Naive thymus-derived CD4-positive, alpha-beta T cell (primary cell): ENCODE measurements at regions of chr11 and their contacts with region 1.

Region 1: GRCh38 chr11:207208-207862 is at the starts of genes BET1L and RIC8A:
- DNase-seq: peak; percentile 92 to 99 (median 98)
- ATAC-seq: peak; percentile 93
- H3K4me3 ChIP-seq: peak within 1 kb of the TSS; percentile 98
- H3K4me3 Mint-ChIP-seq: peak within 1 kb of the TSS; percentile 89 to 100 (median 96)
- H3K27ac ChIP-seq: peak within 1 kb of the TSS; percentile 93
- H3K27ac Mint-ChIP-seq: peak within 1 kb of the TSS; percentile 97 to 100 (median 99)
- H3K4me1 ChIP-seq: peaks cover 28 to 57% of the 10 kb centered on the region in 2 donors
- H3K4me1 Mint-ChIP-seq: peaks cover 17 to 72% (median 50%) of the 10 kb centered on the region in 7 donors
- H3K27me3 ChIP-seq: no peaks in the 10 kb centered on the region
- H3K27me3 Mint-ChIP-seq: no peaks in the 10 kb centered on the region
- total RNA-seq, gene BET1L: 47.1 to 125 (median 63.2) TPM
- total RNA-seq, gene RIC8A: 74.4 to 119 (median 92.0) TPM

Region 2: GRCh38 chr11:227824-228379 is 20.6 kb after region 1 on chr11:
- CTCF ChIA-PET with region 1: interaction called, 5 read pairs
- POLR2A ChIA-PET with region 1: interaction called, 83 read pairs
- intact Hi-C with region 1: no loop called
- DNase-seq: no peak
- ATAC-seq: no peak
- H3K4me3 ChIP-seq: no peak overlapping the region
- H3K4me3 Mint-ChIP-seq: no peak overlapping the region
- H3K27ac ChIP-seq: no peak overlapping the region
- H3K27ac Mint-ChIP-seq: peak overlapping the region in 1 of 9 donors; percentile 36
- H3K4me1 ChIP-seq: no peaks in the 10 kb centered on the region
- H3K4me1 Mint-ChIP-seq: peaks cover 5 to 22% (median 18%) of the 10 kb centered on the region in 7 donors
- H3K27me3 ChIP-seq: no peaks in the 10 kb centered on the region
- H3K27me3 Mint-ChIP-seq: no peaks in the 10 kb centered on the region

Region 3: DNA sequence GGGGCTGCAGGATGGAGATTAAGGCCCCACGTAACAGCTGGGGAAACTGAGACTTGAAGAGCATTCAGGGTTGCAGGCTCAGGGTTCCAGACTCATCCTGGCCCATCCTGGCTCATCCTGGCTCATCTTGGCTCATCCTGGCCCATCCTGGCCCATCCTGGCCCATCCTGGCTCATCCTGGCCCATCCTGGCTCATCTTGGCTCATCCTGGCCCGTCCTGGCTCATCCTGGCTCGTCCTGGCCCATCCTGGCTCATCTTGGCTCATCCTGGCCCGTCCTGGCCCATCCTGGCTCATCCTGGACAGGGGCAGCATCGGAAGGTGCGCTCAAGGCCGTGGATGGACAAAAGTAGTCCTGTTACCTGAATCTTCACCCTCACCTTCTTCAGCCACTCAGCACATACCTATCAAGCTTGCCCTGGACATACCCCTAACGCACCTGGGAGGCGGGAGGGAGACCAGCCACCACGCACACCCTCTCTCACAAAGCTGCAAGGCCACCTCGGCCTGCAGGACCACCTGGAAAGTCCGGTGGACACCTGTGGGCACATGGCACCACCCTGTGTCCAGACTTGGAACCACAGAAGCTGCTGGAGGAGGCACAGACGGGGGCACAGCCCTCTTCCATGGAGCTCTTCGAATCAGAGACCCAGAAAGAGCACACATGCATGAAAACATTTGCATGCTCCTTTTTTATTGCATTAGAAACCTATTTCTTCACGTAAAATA is 50.6 kb after region 1 on chr11:
- CTCF ChIA-PET with region 1: no interaction called
- POLR2A ChIA-PET with region 1: no interaction called
- intact Hi-C with region 1: no loop called
- DNase-seq: no peak
- ATAC-seq: no peak
- H3K4me3 ChIP-seq: no peak overlapping the region
- H3K4me3 Mint-ChIP-seq: no peak overlapping the region
- H3K27ac ChIP-seq: no peak overlapping the region
- H3K27ac Mint-ChIP-seq: peak overlapping the region in 2 of 9 donors; percentile 48 to 55
- H3K4me1 ChIP-seq: no peaks in the 10 kb centered on the region
- H3K4me1 Mint-ChIP-seq: peaks cover 0 to 12% (median 0%) of the 10 kb centered on the region in 7 donors
- H3K27me3 ChIP-seq: no peaks in the 10 kb centered on the region
- H3K27me3 Mint-ChIP-seq: peaks cover 0 to 8% (median 0%) of the 10 kb centered on the region in 5 donors

Region 4: GRCh38 chr11:269146-269890 is 62.0 kb after region 1 on chr11:
- CTCF ChIA-PET with region 1: interaction called, 4 read pairs
- POLR2A ChIA-PET with region 1: interaction called, 63 read pairs
- intact Hi-C with region 1: loop called (anchors 1 kb)
- DNase-seq: peak; percentile 43 to 95 (median 88)
- ATAC-seq: peak; percentile 84
- H3K4me3 ChIP-seq: peak overlapping the region; percentile 59
- H3K4me3 Mint-ChIP-seq: peak overlapping the region; percentile 85 to 96 (median 90)
- H3K27ac ChIP-seq: peak overlapping the region; percentile 80
- H3K27ac Mint-ChIP-seq: peak overlapping the region; percentile 92 to 100 (median 99)
- H3K4me1 ChIP-seq: peaks cover 24 to 26% of the 10 kb centered on the region in 2 donors
- H3K4me1 Mint-ChIP-seq: peaks cover 20 to 47% (median 35%) of the 10 kb centered on the region in 7 donors
- H3K27me3 ChIP-seq: no peaks in the 10 kb centered on the region
- H3K27me3 Mint-ChIP-seq: peaks cover 0 to 8% (median 0%) of the 10 kb centered on the region in 5 donors

Region 5: DNA sequence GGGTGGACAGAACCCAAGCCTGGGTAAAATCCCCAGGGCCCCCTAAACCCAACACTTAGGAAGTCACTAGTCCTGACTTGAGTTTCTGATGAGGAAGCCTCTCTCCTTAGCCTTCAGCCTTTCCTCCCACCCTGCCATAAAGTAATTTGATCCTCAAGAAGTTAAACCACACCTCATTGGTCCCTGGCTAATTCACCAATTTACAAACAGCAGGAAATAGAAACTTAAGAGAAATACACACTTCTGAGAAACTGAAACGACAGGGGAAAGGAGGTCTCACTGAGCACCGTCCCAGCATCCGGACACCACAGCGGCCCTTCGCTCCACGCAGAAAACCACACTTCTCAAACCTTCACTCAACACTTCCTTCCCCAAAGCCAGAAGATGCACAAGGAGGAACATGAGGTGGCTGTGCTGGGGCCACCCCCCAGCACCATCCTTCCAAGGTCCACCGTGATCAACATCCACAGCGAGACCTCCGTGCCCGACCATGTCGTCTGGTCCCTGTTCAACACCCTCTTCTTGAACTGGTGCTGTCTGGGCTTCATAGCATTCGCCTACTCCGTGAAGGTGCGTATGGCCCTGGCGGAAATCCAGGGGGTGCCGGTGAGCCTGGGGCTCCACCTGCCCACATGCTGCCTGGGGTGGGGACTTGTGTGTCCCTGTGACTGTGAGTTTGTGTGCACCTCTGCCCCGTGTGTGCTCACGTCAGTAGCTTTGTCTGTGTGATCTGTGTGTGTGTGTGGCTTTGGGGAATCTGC is 106.6 kb after region 1 on chr11 and contains the start of gene IFITM1:
- CTCF ChIA-PET with region 1: no interaction called
- POLR2A ChIA-PET with region 1: interaction called, 27 read pairs
- intact Hi-C with region 1: loop called (anchors 1 kb)
- DNase-seq: peak in 8 of 9 donors; percentile 55 to 80 (median 76)
- ATAC-seq: peak; percentile 72
- H3K4me3 ChIP-seq: peak within 1 kb of the TSS; percentile 71
- H3K4me3 Mint-ChIP-seq: peak within 1 kb of the TSS; percentile 88 to 100 (median 96)
- H3K27ac ChIP-seq: peak within 1 kb of the TSS; percentile 95
- H3K27ac Mint-ChIP-seq: peak within 1 kb of the TSS; percentile 94 to 99 (median 99)
- H3K4me1 ChIP-seq: peaks cover 13 to 37% of the 10 kb centered on the region in 2 donors
- H3K4me1 Mint-ChIP-seq: peaks cover 26 to 43% (median 34%) of the 10 kb centered on the region in 7 donors
- H3K27me3 ChIP-seq: no peaks in the 10 kb centered on the region
- H3K27me3 Mint-ChIP-seq: peaks cover 0 to 3% (median 0%) of the 10 kb centered on the region in 5 donors
- total RNA-seq, gene IFITM1: 97.4 to 985 (median 241) TPM

Region 6: GRCh38 chr11:416757-417621 is 209.7 kb after region 1 on chr11:
- CTCF ChIA-PET with region 1: no interaction called
- POLR2A ChIA-PET with region 1: interaction called, 18 read pairs
- intact Hi-C with region 1: loop called in 1 of 2 experiments (anchors 2 kb)
- DNase-seq: peak; percentile 34 to 71 (median 47)
- ATAC-seq: peak; percentile 38
- H3K4me3 ChIP-seq: peak overlapping the region; percentile 92
- H3K4me3 Mint-ChIP-seq: peak overlapping the region; percentile 48 to 100 (median 96)
- H3K27ac ChIP-seq: peak overlapping the region; percentile 75
- H3K27ac Mint-ChIP-seq: peak overlapping the region in 4 of 9 donors; percentile 68 to 78 (median 70)
- H3K4me1 ChIP-seq: peaks cover 11 to 21% of the 10 kb centered on the region in 2 donors
- H3K4me1 Mint-ChIP-seq: peaks cover 10 to 37% (median 17%) of the 10 kb centered on the region in 7 donors
- H3K27me3 ChIP-seq: no peaks in the 10 kb centered on the region
- H3K27me3 Mint-ChIP-seq: no peaks in the 10 kb centered on the region

Region 7: DNA sequence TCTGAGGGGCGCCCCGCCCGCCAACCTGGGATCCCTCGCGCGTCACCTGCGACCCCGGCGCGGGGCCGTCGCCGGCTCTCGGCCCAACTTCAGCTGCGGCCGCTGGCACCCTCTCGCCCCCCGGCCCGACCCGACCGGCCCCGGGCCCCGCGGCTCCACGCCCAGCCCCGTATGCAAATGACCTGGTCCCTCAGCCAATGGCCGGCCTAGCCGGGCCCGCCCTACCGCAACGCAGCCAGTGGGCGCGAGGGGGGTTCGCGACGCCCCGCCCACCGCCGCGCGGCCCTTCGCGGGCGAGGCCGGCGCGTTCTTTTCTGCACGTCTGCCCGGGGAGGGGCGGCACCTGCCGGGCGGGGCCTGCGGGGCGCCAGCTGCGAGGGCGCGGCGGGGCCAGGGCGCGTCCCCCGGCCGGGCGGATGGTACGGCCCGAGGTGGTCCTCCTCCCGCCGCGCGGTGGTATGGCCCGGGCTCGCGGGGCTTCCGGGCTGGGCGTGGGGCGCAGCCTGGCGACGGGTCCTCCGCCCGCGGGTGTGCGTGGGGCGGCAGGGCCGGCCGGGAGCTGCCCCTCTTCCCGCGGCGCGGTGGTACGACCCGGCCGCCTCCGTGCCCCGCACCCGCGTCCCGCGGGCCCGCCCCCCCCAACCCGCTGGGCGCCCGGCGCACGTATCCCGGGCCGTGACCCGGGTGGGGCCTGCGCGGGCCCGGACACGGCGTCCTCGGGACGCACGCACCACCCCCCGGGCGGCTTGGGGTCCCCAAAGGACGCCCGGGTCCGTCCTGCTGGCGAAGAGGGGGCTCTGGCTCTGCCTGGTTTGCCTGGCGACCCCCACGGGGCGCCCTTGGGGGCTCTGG is 361.2 kb after region 1 on chr11:
- CTCF ChIA-PET with region 1: no interaction called
- POLR2A ChIA-PET with region 1: no interaction called
- intact Hi-C with region 1: loop called in 1 of 2 experiments (anchors 5 kb)
- DNase-seq: peak; percentile 87 to 99 (median 95)
- ATAC-seq: peak; percentile 95
- H3K4me3 ChIP-seq: peak overlapping the region; percentile 73
- H3K4me3 Mint-ChIP-seq: peak overlapping the region; percentile 69 to 84 (median 77)
- H3K27ac ChIP-seq: peak overlapping the region; percentile 65
- H3K27ac Mint-ChIP-seq: peak overlapping the region in 3 of 9 donors; percentile 40 to 82 (median 68)
- H3K4me1 ChIP-seq: peaks cover 6 to 8% of the 10 kb centered on the region in 2 donors
- H3K4me1 Mint-ChIP-seq: peaks cover 0 to 16% (median 3%) of the 10 kb centered on the region in 7 donors
- H3K27me3 ChIP-seq: no peaks in the 10 kb centered on the region
- H3K27me3 Mint-ChIP-seq: no peaks in the 10 kb centered on the region

Region 8: GRCh38 chr11:695538-696248 is 488.4 kb after region 1 on chr11 and contains the start of gene TMEM80:
- CTCF ChIA-PET with region 1: no interaction called
- POLR2A ChIA-PET with region 1: no interaction called
- intact Hi-C with region 1: no loop called
- DNase-seq: peak; percentile 91 to 98 (median 98)
- ATAC-seq: peak; percentile 76
- H3K4me3 ChIP-seq: peak within 1 kb of the TSS; percentile 97
- H3K4me3 Mint-ChIP-seq: peak within 1 kb of the TSS; percentile 84 to 92 (median 89)
- H3K27ac ChIP-seq: peak within 1 kb of the TSS; percentile 100
- H3K27ac Mint-ChIP-seq: peak within 1 kb of the TSS; percentile 88 to 98 (median 95)
- H3K4me1 ChIP-seq: peaks cover 13 to 42% of the 10 kb centered on the region in 2 donors
- H3K4me1 Mint-ChIP-seq: peaks cover 40 to 56% (median 52%) of the 10 kb centered on the region in 7 donors
- H3K27me3 ChIP-seq: no peaks in the 10 kb centered on the region
- H3K27me3 Mint-ChIP-seq: no peaks in the 10 kb centered on the region
- total RNA-seq, gene TMEM80: 26.2 to 44.3 (median 40.4) TPM